A549 (cell line): ENCODE measurements at regions of chr17 and their contacts with region 1.

Region 1: DNA sequence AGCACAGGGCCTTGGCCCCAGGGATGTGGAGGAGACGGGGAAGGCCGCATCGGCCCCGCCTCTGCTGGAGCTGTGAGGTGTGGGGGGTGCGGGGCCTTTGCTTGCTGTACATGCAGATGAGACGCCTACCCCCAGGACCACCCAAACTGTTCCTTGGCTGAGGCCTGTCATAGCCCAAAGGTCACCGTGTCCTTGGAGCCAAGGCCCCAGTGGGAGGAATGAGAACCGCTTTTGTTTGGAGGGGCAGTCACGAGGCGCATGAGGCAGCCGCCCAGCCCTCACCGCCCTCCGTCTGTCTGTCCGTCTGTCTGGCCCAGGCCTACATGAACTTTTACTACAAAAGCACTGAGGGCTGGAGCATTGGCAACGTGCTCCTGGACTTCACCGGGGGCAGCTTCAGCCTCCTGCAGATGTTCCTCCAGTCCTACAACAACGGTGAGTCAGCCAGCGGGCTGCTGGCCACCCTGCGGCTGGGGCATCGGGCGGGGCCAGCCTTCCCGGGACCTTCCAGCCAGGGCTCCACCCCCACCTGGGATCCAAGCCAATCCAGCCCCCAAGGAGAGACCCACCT is 8.8 kb downstream of the TAX1BP3 start:
- DNase-seq: peak; percentile 61 to 80
- ATAC-seq: peak; percentile 51 to 68
- H3K4me3 ChIP-seq: no peak overlapping the region
- H3K27ac ChIP-seq: peak overlapping the region; percentile 42 to 80
- H3K4me1 ChIP-seq: peaks cover 15% of the 10 kb centered on the region
- CTCF ChIP-seq: no peak
- EP300 ChIP-seq: no peak
- POLR2A ChIP-seq: no peak
- RAD21 ChIP-seq: no peak

Region 2: DNA sequence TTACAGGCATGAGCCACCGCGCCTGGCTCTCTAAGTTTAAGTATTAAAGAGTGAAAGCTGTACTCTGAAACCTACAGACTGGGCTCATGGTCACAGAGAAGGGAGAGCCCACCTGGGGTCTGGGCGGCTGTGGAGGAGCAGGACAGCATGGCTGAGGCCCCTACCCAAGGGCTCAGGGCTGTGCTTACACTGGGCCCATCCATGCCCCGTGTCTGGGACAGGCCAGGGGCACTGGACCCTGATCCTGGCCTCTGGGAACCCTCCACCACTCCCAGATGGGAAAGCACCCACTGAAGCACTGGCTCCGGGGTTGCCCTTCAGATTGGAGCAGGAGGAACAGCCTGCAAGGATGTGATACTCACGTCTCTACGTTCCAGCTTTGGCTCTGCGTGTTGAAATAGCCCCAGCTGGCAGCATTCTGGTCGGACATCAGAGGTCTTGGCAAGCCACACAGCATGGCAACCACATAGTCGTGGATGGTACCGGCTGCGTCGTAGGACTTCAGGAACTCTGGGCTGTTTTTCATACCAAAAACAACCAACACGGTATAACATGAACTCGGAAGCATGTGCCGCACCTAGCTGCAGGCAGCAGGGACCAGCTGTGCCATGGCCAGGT is 36.5 kb before region 1 on chr17:
- CTCF ChIA-PET with region 1: no interaction called
- POLR2A ChIA-PET with region 1: no interaction called
- DNase-seq: no peak
- ATAC-seq: no peak; a peak in 1 of 6 replicates
- H3K4me3 ChIP-seq: no peak overlapping the region
- H3K27ac ChIP-seq: no peak overlapping the region
- H3K4me1 ChIP-seq: no peaks in the 10 kb centered on the region
- CTCF ChIP-seq: no peak
- EP300 ChIP-seq: no peak
- POLR2A ChIP-seq: no peak
- RAD21 ChIP-seq: no peak

Region 3: GRCh38 chr17:3636154-3636907 is 23.3 kb before region 1 on chr17 and contains the starts of genes CTNS and SHPK:
- CTCF ChIA-PET with region 1: interaction called, 4 read pairs
- POLR2A ChIA-PET with region 1: interaction called, 11 read pairs
- DNase-seq: peak; percentile 97 to 99
- ATAC-seq: peak; percentile 94 to 97
- H3K4me3 ChIP-seq: peak within 1 kb of the TSS; percentile 93
- H3K27ac ChIP-seq: peak within 1 kb of the TSS; percentile 90 to 97
- H3K4me1 ChIP-seq: peaks cover 14% of the 10 kb centered on the region
- CTCF ChIP-seq: no peak
- EP300 ChIP-seq: no peak
- POLR2A ChIP-seq: peak; percentile 93
- RAD21 ChIP-seq: no peak
- polyA plus RNA-seq, gene CTNS: 6.5 and 7.4 TPM in 2 replicates
- polyA plus RNA-seq, gene SHPK: 10.7 and 13.4 TPM in 2 replicates

Region 4: GRCh38 chr17:3927628-3928340 is 268.2 kb after region 1 on chr17:
- CTCF ChIA-PET with region 1: no interaction called
- POLR2A ChIA-PET with region 1: no interaction called
- DNase-seq: no peak
- ATAC-seq: no peak
- H3K4me3 ChIP-seq: no peak overlapping the region
- H3K27ac ChIP-seq: no peak overlapping the region
- H3K4me1 ChIP-seq: no peaks in the 10 kb centered on the region
- CTCF ChIP-seq: no peak
- EP300 ChIP-seq: no peak
- POLR2A ChIP-seq: no peak
- RAD21 ChIP-seq: no peak